ENCODE measurements at regions of chr12 and their contacts with region 1.

Region 1: GRCh38 chr12:40238256-40238902 is 13.6 kb downstream of the LRRK2 start:
- DNase-seq: no peak
- H3K4me3 ChIP-seq: no peak overlapping the region
- H3K27ac ChIP-seq: no peak overlapping the region
- H3K4me1 ChIP-seq: peaks cover 46% of the 10 kb centered on the region
- CTCF ChIP-seq: no peak

Region 2: GRCh38 chr12:40248585-40249297 is 10.4 kb after region 1 on chr12:
- CTCF ChIA-PET with region 1: interaction called, 3 read pairs
- POLR2A ChIA-PET with region 1: interaction called, 46 read pairs
- intact Hi-C with region 1: loop called (anchors 2 kb)
- DNase-seq: peak; percentile 56
- H3K4me3 ChIP-seq: peak overlapping the region; percentile 37
- H3K27ac ChIP-seq: peak overlapping the region; percentile 88
- H3K4me1 ChIP-seq: peaks cover 47% of the 10 kb centered on the region
- CTCF ChIP-seq: no peak